ENCODE measurements at regions of chr15 and their contacts with region 1.

Region 1: GRCh38 chr15:56428821-56429458 is 36.0 kb downstream of the MNS1 start:
- DNase-seq: peak; percentile 68
- H3K4me3 ChIP-seq: no peak overlapping the region
- H3K27ac ChIP-seq: no peak overlapping the region
- H3K4me1 ChIP-seq: peaks cover 3% of the 10 kb centered on the region
- CTCF ChIP-seq: peak; percentile 91

Region 2: GRCh38 chr15:55993111-55993803 is 435.7 kb before region 1 on chr15 and contains the start of gene NEDD4:
- CTCF ChIA-PET with region 1: no interaction called
- POLR2A ChIA-PET with region 1: no interaction called
- intact Hi-C with region 1: loop called (anchors 5 kb)
- DNase-seq: peak; percentile 87
- H3K4me3 ChIP-seq: peak within 1 kb of the TSS; percentile 84
- H3K27ac ChIP-seq: peak within 1 kb of the TSS; percentile 25
- H3K4me1 ChIP-seq: peaks cover 17% of the 10 kb centered on the region
- CTCF ChIP-seq: peak; percentile 59
- total RNA-seq, gene NEDD4: 4.6 and 4.8 TPM in 2 replicates

Region 3: DNA sequence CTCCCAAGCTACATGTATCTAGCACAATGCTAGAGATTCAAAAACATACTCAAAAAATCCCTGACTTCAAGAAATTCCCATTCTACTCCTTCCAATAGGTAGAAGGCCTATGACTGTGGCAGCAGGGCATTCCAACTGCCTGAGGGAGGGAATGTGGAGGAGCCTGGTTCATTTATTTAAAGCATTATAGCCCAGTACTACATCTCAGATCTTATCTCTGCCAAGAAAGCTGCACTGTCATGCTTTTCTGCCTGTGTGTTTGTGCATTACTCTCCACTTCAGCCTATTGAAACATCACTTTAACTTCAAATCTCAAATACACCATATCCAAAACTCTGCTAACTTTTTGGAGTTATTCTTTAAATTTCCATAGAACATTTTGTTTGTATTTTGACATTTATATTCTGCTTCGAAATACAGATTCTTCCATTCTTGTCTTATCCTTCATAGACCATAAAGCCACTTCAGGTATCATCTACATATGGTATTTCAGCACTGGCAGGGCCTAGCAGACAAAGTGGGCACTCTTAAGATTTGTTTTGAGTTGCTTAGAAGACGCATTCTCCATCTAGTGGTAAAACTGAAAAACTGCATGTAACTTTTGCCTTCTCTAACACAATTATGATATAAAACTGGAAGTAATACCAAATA is 376.4 kb before region 1 on chr15:
- CTCF ChIA-PET with region 1: no interaction called
- POLR2A ChIA-PET with region 1: no interaction called
- intact Hi-C with region 1: loop called (anchors 2 kb)
- DNase-seq: peak; percentile 60
- H3K4me3 ChIP-seq: no peak overlapping the region
- H3K27ac ChIP-seq: no peak overlapping the region
- H3K4me1 ChIP-seq: no peaks in the 10 kb centered on the region
- CTCF ChIP-seq: peak; percentile 93

Region 4: GRCh38 chr15:56076640-56077039 is 352.3 kb before region 1 on chr15:
- CTCF ChIA-PET with region 1: no interaction called
- POLR2A ChIA-PET with region 1: no interaction called
- intact Hi-C with region 1: no loop called
- DNase-seq: no peak
- H3K4me3 ChIP-seq: no peak overlapping the region
- H3K27ac ChIP-seq: no peak overlapping the region
- H3K4me1 ChIP-seq: no peaks in the 10 kb centered on the region
- CTCF ChIP-seq: no peak

Region 5: GRCh38 chr15:56245871-56246814 is 182.8 kb before region 1 on chr15:
- CTCF ChIA-PET with region 1: interaction called, 5 read pairs
- POLR2A ChIA-PET with region 1: interaction called, 4 read pairs
- intact Hi-C with region 1: loop called (anchors 1 kb)
- DNase-seq: peak; percentile 96
- H3K4me3 ChIP-seq: peak overlapping the region; percentile 88
- H3K27ac ChIP-seq: peak overlapping the region; percentile 76
- H3K4me1 ChIP-seq: peaks cover 26% of the 10 kb centered on the region
- CTCF ChIP-seq: peak; percentile 100

Region 6: DNA sequence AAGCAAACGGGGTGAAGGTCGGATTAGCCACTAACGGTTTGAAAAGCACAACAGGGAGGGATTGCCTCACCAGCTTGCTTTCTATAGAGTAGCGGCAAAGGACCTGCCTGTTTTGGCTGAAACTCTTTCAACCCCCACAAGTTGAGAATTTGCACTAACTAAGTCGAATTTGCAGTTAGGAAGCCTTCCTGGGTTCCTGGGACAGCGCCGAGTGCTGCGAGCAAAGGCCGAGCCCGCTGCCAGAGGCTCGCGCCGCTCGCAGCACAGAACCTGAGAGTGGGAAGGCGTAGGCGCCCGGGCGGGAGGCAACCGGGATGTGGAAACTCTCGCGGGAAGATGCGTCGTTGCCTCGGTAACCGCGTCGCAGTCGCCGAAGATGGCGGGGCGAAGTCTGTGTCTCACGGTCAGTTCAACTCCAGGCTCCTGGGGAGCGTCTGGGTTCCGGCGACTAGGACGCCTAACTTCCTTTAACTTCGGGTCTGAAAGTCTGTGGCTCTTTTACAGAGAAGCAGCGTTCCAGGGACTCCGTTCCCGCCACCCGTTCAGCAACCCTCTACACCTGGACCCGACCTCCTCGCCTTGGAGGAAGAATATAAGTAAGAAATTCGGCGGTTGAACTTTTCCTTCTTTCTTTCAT is 63.7 kb before region 1 on chr15 and contains the start of gene TEX9:
- CTCF ChIA-PET with region 1: no interaction called
- POLR2A ChIA-PET with region 1: interaction called, 3 read pairs
- intact Hi-C with region 1: loop called (anchors 5 kb)
- DNase-seq: peak; percentile 93
- H3K4me3 ChIP-seq: peak within 1 kb of the TSS; percentile 88
- H3K27ac ChIP-seq: peak within 1 kb of the TSS; percentile 93
- H3K4me1 ChIP-seq: peaks cover 18% of the 10 kb centered on the region
- CTCF ChIP-seq: no peak
- total RNA-seq, gene TEX9: 16.9 and 20.0 TPM in 2 replicates

Region 7: GRCh38 chr15:56411122-56411749 is 17.7 kb before region 1 on chr15:
- CTCF ChIA-PET with region 1: no interaction called
- POLR2A ChIA-PET with region 1: interaction called, 10 read pairs
- intact Hi-C with region 1: no loop called
- DNase-seq: no peak
- H3K4me3 ChIP-seq: no peak overlapping the region
- H3K27ac ChIP-seq: no peak overlapping the region
- H3K4me1 ChIP-seq: no peaks in the 10 kb centered on the region
- CTCF ChIP-seq: no peak

Region 8: GRCh38 chr15:56445746-56446145 is 16.8 kb after region 1 on chr15:
- CTCF ChIA-PET with region 1: no interaction called
- POLR2A ChIA-PET with region 1: no interaction called
- intact Hi-C with region 1: no loop called
- DNase-seq: no peak
- H3K4me3 ChIP-seq: no peak overlapping the region
- H3K27ac ChIP-seq: no peak overlapping the region
- H3K4me1 ChIP-seq: no peaks in the 10 kb centered on the region
- CTCF ChIP-seq: no peak

Measured in OCI-LY7 (cell line).